Activated CD4-positive, alpha-beta T cell treated with anti-CD3 and anti-CD28 coated beads, Interleukin-2, amount 10 ng/mL, durations not matched to agents 24 days and 14 days (primary cell): ENCODE measurements at regions of chr2 and their contacts with region 1.

Region 1: DNA sequence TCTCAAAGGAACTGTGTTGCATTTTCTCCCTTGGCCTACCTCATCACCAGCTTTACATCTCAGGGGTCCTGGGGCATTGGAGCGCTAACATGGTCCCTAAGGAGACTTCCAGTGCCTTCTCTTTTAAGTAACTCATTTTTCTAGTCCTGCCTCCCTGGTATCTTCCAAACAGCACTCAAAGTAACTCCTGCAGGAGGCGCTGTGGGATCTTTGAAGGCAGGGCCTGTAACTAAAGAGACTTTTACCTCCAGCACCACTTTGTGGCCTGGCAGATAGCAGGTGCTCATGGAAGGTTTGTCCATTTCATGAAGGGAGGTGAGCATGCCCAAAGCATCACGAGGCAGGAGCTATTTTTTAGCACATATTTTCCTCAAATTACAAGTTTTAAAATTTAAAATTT is 411.0 kb upstream of the GYPC start:
- DNase-seq: peak; percentile 76
- H3K4me3 Mint-ChIP-seq: no peak overlapping the region
- H3K27ac Mint-ChIP-seq: no peak overlapping the region
- H3K4me1 Mint-ChIP-seq: no peaks in the 10 kb centered on the region
- H3K27me3 Mint-ChIP-seq: no peaks in the 10 kb centered on the region

Region 2: GRCh38 chr2:126634273-126634861 is 389.4 kb after region 1 on chr2:
- intact Hi-C with region 1: loop called (anchors 10 kb)
- DNase-seq: peak; percentile 75
- H3K4me3 Mint-ChIP-seq: no peak overlapping the region
- H3K27ac Mint-ChIP-seq: no peak overlapping the region
- H3K4me1 Mint-ChIP-seq: peaks cover 3% of the 10 kb centered on the region
- H3K27me3 Mint-ChIP-seq: peaks cover 26% of the 10 kb centered on the region